Aorta (tissue), 5 donors: ENCODE measurements at regions of chr20 and their contacts with region 1.

Region 1: DNA sequence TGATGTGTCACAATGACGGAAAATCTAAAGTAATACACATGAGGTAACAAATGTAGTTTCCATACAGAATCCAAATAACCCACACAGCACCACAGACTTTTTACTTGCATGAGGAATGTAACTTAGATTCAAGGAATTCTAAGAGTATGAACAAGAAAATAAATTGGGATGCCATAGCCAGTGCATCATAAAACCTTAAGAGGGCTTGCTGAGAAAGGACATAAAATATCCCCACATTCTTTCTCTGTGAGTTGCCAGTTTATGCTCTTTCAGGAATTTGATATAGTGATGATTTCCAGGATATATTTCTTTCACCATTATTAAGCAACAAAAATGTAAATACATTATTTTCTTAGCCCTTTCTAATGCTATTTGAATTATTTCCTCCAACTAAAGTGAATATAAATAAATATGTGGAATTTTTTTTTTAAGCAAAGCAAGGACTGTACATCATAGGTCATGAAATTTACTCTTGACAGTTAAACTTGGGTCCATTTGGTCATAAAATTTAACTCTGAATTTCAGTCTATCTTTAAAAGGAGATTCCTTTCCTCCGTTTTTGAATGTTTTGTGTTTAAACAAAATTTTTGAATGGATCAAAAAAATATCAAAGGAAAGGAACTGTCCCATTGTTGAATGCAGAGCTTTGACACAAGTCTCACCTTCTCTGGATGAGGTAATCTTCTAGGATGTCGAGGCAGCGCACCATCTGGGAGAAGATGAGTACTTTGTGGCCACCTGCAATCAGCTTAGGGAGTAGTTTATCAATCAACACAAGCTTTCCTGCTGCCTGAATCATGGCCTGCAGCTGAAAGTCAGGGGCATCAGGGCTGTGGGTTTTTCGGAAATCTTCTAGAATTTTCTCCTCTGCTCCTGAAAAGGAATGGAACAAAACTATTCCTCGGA is 116.3 kb upstream of the EMILIN3 start:
- DNase-seq: no peak
- ATAC-seq: no peak
- H3K4me3 ChIP-seq: no peak overlapping the region
- H3K27ac ChIP-seq: peak overlapping the region in 1 of 2 donors; percentile 74
- H3K4me1 ChIP-seq: no peaks in the 10 kb centered on the region
- H3K27me3 ChIP-seq: no peaks in the 10 kb centered on the region

Region 2: GRCh38 chr20:41617931-41618806 is 135.3 kb after region 1 on chr20 and contains the start of gene CHD6:
- intact Hi-C with region 1: loop called in 1 of 2 experiments (anchors 10 kb)
- DNase-seq: peak; percentile 100
- ATAC-seq: peak; percentile 98
- H3K4me3 ChIP-seq: peak within 1 kb of the TSS; percentile 99
- H3K27ac ChIP-seq: peak within 1 kb of the TSS; percentile 83 to 89
- H3K4me1 ChIP-seq: peaks cover 3 to 15% of the 10 kb centered on the region in 2 donors
- H3K27me3 ChIP-seq: no peaks in the 10 kb centered on the region
- total RNA-seq, gene CHD6: 65.9 to 72.3 TPM